Activated naive CD4-positive, alpha-beta T cell treated with anti-CD3 and anti-CD28 coated beads for 36 hours (primary cell): ENCODE measurements at regions of chr14 and their contacts with region 1.

Region 1: GRCh38 chr14:22653012-22653621 is 9.0 kb upstream of the OR6J1 start:
- DNase-seq: peak; percentile 78
- H3K4me3 Mint-ChIP-seq: no peak overlapping the region
- H3K27ac Mint-ChIP-seq: no peak overlapping the region
- H3K4me1 Mint-ChIP-seq: no peaks in the 10 kb centered on the region
- H3K27me3 Mint-ChIP-seq: no peaks in the 10 kb centered on the region

Region 2: GRCh38 chr14:21868442-21869046 is 784.6 kb before region 1 on chr14:
- CTCF ChIA-PET with region 1: no interaction called
- intact Hi-C with region 1: loop called (anchors 5 kb)
- DNase-seq: peak; percentile 95
- H3K4me3 Mint-ChIP-seq: peak overlapping the region; percentile 71
- H3K27ac Mint-ChIP-seq: peak overlapping the region; percentile 83
- H3K4me1 Mint-ChIP-seq: peaks cover 42% of the 10 kb centered on the region
- H3K27me3 Mint-ChIP-seq: no peaks in the 10 kb centered on the region

Region 3: GRCh38 chr14:21978184-21978998 is 674.7 kb before region 1 on chr14:
- CTCF ChIA-PET with region 1: no interaction called
- intact Hi-C with region 1: loop called (anchors 10 kb)
- DNase-seq: peak; percentile 78
- H3K4me3 Mint-ChIP-seq: peak overlapping the region; percentile 76
- H3K27ac Mint-ChIP-seq: peak overlapping the region; percentile 76
- H3K4me1 Mint-ChIP-seq: peaks cover 26% of the 10 kb centered on the region
- H3K27me3 Mint-ChIP-seq: no peaks in the 10 kb centered on the region

Region 4: DNA sequence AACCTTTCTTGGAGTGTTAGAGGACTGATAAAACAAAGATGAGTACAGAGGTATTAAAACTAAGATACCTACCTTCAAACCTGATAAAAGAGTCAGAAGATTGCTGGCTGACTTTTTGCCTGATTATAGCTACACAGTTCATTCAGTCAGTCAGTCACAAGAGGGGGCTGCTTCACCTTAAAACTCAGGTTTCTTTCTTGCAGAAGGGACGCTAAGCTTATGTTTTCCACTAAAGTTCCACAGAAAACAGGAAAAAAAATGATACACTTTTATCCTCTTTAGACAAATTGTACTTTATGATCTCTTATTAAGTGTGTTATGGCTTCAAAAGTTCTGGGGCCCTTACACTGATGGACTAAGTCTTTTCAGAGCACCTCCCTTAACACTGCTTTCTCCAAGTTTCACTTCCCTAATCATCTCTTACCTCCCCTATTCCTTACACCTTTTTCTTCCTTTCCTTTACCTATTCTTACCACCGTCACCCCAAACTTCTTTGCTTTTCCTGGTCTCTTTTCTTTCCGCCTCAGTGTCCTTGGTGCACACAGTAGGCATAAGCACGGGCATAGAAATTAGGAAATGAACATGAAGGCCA is 530.8 kb before region 1 on chr14:
- CTCF ChIA-PET with region 1: no interaction called
- intact Hi-C with region 1: loop called (anchors 10 kb)
- DNase-seq: peak; percentile 39
- H3K4me3 Mint-ChIP-seq: peak overlapping the region; percentile 79
- H3K27ac Mint-ChIP-seq: peak overlapping the region; percentile 93
- H3K4me1 Mint-ChIP-seq: peaks cover 20% of the 10 kb centered on the region
- H3K27me3 Mint-ChIP-seq: no peaks in the 10 kb centered on the region

Region 5: DNA sequence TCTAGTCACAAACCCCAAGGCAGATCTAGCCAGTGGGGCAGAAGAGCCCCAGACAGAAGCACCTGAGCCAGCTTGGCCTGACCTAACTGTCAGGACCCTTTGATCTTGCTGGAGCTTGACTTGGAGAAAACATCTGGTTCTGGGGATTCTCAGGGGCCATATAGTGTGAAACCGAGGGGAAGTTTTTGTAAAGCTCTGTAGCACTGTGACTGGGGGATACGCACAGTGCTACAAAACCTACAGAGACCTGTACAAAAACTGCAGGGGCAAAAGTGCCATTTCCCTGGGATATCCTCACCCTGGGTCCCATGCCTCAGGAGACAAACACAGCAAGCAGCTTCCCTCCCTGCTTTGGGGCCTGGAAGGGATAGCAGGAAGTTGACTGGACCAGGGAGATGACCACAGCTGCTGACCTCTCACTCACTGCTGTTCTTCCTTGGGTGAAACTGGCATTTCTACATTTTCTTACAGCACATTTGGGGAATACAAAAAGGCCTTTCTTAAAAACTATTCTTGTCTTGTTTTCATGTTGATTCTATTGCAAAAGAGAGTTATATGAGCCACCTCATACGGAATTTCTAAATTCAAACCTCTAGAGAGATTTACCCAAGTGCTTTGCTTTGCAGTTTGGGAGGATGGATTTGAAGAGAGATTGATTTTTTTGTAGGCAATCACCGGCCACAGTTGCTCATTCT is 204.1 kb before region 1 on chr14:
- CTCF ChIA-PET with region 1: no interaction called
- intact Hi-C with region 1: no loop called
- DNase-seq: no peak
- H3K4me3 Mint-ChIP-seq: no peak overlapping the region
- H3K27ac Mint-ChIP-seq: no peak overlapping the region
- H3K4me1 Mint-ChIP-seq: no peaks in the 10 kb centered on the region
- H3K27me3 Mint-ChIP-seq: no peaks in the 10 kb centered on the region

Region 6: GRCh38 chr14:22598099-22598899 is 54.8 kb before region 1 on chr14 and contains the start of gene ABHD4:
- CTCF ChIA-PET with region 1: interaction called, 17 read pairs
- intact Hi-C with region 1: loop called (anchors 2 kb)
- DNase-seq: peak; percentile 75
- H3K4me3 Mint-ChIP-seq: peak within 1 kb of the TSS; percentile 90
- H3K27ac Mint-ChIP-seq: peak within 1 kb of the TSS; percentile 72
- H3K4me1 Mint-ChIP-seq: peaks cover 28% of the 10 kb centered on the region
- H3K27me3 Mint-ChIP-seq: no peaks in the 10 kb centered on the region
- total RNA-seq, gene ABHD4: 11.1 to 11.9 TPM

Region 7: DNA sequence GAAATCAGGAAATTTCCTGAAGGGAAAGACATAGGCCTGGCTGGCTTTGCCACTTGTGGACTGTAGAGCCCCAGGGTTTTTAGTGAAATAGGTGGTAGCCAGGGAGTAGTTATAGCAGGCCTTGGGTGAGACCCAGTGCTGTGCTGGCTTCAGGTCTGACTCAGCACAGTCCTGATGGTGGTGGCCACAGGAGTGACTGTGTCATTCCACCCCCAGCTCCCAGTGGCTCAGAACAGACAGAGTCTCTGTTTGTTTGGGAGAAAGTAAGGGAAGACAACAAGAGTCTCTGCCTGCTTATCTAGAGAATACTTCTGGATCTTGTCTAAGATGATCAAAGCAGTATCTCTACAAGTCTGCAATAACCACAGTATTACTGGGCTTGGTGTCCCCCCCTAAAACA is 18.5 kb after region 1 on chr14:
- CTCF ChIA-PET with region 1: no interaction called
- intact Hi-C with region 1: no loop called
- DNase-seq: no peak
- H3K4me3 Mint-ChIP-seq: no peak overlapping the region
- H3K27ac Mint-ChIP-seq: no peak overlapping the region
- H3K4me1 Mint-ChIP-seq: peaks cover 8% of the 10 kb centered on the region
- H3K27me3 Mint-ChIP-seq: no peaks in the 10 kb centered on the region

Region 8: DNA sequence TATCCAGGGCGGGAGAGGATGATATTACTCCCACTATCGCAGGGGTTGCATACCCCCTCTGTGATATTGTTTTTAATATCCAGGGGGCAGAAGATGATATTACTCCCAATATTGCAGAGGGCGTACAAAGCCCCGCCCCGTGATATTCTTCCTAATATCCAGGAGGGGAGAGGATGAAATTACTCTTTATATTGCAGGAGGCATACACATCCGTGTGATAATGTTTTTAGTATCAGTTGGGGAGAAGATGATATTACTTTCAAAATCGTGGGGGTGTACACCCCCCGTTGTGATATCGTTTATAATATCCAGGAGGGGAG is 60.5 kb after region 1 on chr14:
- CTCF ChIA-PET with region 1: interaction called, 3 read pairs
- intact Hi-C with region 1: loop called (anchors 1 kb)
- DNase-seq: no peak
- H3K4me3 Mint-ChIP-seq: peak overlapping the region; percentile 84
- H3K27ac Mint-ChIP-seq: peak overlapping the region; percentile 63
- H3K4me1 Mint-ChIP-seq: peaks cover 13% of the 10 kb centered on the region
- H3K27me3 Mint-ChIP-seq: peaks cover 11% of the 10 kb centered on the region

Region 9: DNA sequence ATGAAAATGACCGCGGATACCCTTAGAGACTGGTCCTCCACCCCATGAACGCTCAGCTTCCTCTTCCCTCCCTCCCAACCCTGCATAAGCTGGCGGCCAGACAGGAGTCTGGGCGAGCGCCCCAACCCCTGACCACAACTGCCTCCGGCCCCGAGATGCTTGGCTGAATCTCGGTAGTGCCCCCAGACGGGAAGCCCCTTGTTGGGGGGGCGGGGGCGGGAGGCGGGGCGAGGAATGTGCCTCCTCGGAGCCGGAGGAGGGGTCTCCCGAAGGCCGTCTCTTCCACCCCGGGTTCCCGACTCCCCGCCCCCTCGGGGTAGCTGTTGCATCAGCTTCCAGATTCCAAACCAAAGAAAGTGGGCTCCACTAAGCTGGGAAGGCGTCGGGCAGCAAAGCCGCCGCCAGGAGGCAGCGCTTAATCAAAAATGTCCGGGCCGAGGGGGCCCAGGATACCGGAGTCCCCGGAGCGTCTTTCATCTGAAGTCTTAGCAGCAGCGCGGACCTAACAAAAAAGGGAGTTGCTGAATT is 169.5 kb after region 1 on chr14:
- CTCF ChIA-PET with region 1: interaction called, 3 read pairs
- intact Hi-C with region 1: loop called (anchors 1 kb)
- DNase-seq: peak; percentile 75
- H3K4me3 Mint-ChIP-seq: peak overlapping the region; percentile 61
- H3K27ac Mint-ChIP-seq: no peak overlapping the region
- H3K4me1 Mint-ChIP-seq: peaks cover 31% of the 10 kb centered on the region
- H3K27me3 Mint-ChIP-seq: peaks cover 1% of the 10 kb centered on the region